Right ventricle myocardium inferior (tissue), 1 donor: ENCODE measurements at regions of chr10 and their contacts with region 1.

Region 1: GRCh38 chr10:35635576-35635975 is 6.5 kb downstream of the FZD8 start:
- DNase-seq: no peak
- ATAC-seq: peak; percentile 70

Region 2: GRCh38 chr10:35451151-35452016 is 184.2 kb before region 1 on chr10:
- intact Hi-C with region 1: no loop called
- DNase-seq: peak; percentile 75
- ATAC-seq: peak; percentile 65

Region 3: GRCh38 chr10:35533565-35533964 is 102.0 kb before region 1 on chr10:
- intact Hi-C with region 1: no loop called
- DNase-seq: no peak
- ATAC-seq: no peak

Region 4: GRCh38 chr10:35598384-35598783 is 37.2 kb before region 1 on chr10:
- intact Hi-C with region 1: no loop called
- DNase-seq: no peak
- ATAC-seq: no peak

Region 5: DNA sequence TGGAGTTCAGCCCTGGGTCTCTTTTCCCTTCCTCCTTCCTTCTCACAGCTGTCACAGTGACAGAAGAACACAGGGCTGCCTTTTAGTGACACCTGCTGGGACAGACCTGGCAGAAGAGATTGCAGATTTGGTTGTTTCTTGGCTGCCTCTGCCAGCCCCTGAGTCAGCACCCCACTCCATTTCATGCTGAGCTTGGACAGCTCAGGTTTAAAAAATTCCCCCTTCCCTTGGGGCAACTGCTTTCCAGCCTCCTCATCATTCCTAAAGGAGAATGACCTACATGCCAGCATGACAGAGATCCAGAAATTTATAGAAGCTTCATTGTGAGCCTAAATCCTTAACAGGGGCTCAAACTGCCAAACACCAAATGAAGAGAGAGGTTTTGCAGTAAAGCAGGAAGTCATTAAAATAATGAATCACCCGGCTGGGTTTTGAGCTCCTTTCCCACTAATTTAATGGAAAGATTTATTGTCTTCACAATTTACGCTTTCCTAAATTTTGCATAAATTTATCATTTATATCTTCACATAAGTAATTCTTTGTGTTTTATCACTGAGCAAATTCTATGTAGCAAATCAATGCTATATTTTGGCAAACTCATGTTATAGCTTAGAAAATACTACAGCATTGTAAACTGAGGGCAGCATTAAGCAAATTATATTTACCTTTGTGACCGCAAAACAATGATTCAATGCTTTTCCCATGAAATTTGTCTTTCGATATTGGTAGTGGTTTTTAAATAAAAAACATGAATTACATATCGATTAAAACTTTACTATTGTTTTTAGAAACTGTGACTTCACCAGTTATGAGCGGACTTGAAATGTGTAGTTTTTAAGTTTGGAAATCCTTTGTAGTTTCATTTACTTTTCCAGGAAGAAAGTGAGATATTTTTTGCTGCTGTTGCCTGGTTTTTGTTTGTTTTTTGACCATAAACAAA is 1090.3 kb after region 1 on chr10:
- intact Hi-C with region 1: loop called (anchors 5 kb)
- DNase-seq: no peak
- ATAC-seq: peak; percentile 72

Region 6: GRCh38 chr10:36779234-36779846 is 1143.8 kb after region 1 on chr10:
- intact Hi-C with region 1: loop called (anchors 1 kb)
- DNase-seq: no peak
- ATAC-seq: peak; percentile 87

Region 7: DNA sequence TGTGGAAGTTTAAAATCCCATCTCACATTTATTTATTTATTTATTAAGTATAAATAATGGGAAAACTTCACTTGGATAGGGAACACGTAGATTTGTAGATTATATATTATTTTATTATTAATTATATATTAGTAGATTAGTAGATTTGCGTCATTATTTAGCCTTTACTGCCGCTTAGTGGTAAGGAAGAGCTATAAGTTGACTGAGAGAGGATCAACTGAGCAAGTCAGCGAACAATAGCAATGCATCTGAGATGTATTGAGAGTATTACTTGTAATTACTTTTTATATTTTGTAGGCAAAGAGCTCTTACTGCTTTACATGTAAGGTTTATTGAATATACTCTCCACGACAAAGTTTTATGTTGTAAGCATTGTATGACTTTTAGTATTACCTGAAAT is 1245.3 kb after region 1 on chr10:
- intact Hi-C with region 1: loop called (anchors 5 kb)
- DNase-seq: no peak
- ATAC-seq: no peak